ENCODE measurements at regions of chr20 and their contacts with region 1.

Region 1: GRCh38 chr20:35741892-35742740 is at the start of gene RBM39:
- DNase-seq: peak; percentile 100
- total RNA-seq, gene RBM39: 210 to 217 TPM

Region 2: DNA sequence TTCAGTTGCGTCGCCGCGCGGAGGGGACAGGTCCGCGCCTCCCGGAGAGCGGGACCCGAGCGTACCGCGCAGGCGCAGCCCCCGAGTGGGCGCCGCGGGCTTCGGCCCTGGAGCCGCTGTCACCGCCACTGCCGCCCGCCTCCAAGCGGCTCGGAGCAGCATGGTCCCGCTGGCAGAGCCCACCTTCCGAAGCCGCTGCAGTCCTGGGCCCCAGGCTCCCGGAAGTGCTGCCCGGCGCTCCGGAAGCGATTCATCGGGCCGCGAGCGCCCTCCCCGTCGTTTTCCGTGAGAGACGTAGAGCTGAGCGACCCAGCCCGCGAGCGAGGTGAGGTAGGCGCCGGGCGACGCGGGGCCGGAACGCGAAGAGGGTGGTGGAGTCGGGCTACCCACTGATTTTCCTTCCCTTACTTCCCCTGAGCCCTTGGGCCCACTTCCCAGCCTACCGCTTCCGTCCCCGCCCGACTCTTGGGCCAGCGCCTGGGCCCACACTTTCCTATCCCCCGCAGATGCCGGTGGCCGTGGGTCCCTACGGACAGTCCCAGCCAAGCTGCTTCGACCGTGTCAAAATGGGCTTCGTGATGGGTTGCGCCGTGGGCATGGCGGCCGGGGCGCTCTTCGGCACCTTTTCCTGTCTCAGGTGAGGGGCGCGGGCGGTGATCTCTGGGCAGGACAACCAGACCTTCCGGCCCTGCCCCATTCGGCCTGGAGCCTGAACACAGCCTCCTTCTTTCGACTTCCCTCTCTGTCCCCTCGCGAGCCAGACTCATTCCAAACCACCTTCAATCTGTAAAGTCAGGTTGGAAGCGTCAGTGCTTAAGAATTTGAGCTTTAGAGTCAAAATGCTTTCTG is 42.8 kb before region 1 on chr20 and contains the starts of genes NFS1 and ROMO1:
- intact Hi-C with region 1: no loop called
- DNase-seq: peak; percentile 96
- total RNA-seq, gene NFS1: 15.9 to 22.0 TPM
- total RNA-seq, gene ROMO1: 126 TPM

Region 3: DNA sequence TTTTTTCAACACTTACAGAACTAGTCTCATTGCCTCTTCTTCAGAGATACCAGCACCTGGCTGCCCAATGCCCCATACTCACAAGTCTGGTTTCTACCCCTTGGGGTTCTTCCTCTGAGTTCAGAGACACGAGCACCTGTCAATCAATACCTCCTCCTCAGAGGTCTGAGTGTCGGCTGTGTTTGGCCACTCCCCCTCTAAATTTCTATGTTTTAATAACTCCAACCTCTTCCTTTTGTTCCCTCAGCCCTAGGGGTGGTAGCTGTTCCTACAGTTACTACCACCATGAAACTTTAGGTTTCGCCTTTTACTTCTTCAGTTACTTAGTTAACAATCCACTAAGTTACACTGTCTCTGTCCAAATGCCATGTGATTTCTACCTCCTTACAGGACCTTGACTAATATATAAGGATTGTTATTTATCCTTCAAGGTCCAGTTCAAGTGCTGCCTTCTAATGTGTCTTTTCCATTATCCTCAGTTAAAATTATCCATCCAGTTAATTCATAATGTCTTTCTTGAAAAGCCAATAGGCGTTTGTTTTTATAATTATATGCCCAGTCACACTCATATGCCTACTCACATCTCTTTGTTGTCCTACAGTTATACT is 15.1 kb after region 1 on chr20:
- intact Hi-C with region 1: loop called in 1 of 2 experiments (anchors 1 kb)
- DNase-seq: no peak

Region 4: GRCh38 chr20:35771689-35772562 is 29.8 kb after region 1 on chr20 and contains the start of gene PHF20:
- intact Hi-C with region 1: loop called in 1 of 2 experiments (anchors 2 kb)
- DNase-seq: peak; percentile 100
- total RNA-seq, gene PHF20: 55.2 to 59.6 TPM